CD14-positive monocyte (primary cell): ENCODE measurements at regions of chr16 and their contacts with region 1.

Region 1: DNA sequence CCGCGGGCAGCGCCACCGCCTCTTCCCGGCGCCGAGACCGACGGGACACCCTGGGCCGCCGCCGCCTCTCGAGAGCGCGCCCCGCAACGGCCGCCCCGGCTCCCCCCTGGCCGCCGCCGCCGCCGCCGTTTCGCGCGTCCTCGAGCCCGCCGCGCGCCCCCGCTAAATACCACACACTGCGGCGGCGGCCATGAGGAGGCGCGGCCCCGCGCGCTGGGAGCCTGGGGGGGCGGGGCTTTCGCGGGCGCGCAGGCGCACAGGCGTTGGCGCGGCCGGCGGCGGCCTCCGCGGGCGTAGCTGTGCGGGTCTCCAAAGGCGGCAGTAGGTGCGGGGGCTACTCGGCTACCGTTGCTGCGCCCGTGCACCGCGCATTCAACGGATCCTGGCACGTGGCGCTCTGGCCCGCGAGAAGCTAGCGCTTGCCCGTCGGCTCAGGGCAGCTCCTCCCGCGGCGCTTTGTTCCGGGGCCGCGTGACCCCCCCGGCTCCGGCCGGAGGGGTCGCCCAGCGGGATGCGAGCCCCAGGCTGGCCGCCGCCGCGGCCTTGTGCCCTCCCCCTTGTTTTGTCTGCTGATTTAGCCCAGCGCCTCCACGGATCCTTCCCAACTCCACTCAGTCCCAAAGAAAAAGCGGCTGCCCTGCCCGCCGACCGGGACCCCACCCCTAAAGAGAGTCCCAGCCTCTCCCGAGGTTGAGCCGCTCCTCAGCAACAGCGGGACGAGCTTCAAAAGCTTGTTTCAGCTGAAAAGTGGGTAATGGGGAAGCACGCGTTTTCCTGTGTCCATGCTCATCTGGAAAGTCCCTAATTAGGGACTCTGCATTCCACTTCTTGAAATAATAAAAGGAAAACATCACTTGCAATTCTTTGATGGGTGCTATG is at the start of gene SIAH1:
- DNase-seq: peak; percentile 68 to 85 (median 72)
- H3K4me3 ChIP-seq: peak within 1 kb of the TSS; percentile 64 to 98 (median 81)
- H3K4me3 Mint-ChIP-seq: peak within 1 kb of the TSS; percentile 95 to 96
- H3K27ac ChIP-seq: peak within 1 kb of the TSS; percentile 83 to 97
- H3K27ac Mint-ChIP-seq: peak within 1 kb of the TSS; percentile 97 to 99 (median 98)
- H3K4me1 ChIP-seq: peaks cover 38 to 62% of the 10 kb centered on the region in 2 donors
- H3K4me1 Mint-ChIP-seq: peaks cover 45% of the 10 kb centered on the region
- H3K27me3 ChIP-seq: no peaks in the 10 kb centered on the region
- H3K27me3 Mint-ChIP-seq: no peaks in the 10 kb centered on the region
- CTCF ChIP-seq: no peak
- polyA plus RNA-seq, gene SIAH1: 4.9 to 11.8 (median 5.6) TPM

Region 2: GRCh38 chr16:48353565-48354163 is 31.8 kb before region 1 on chr16:
- intact Hi-C with region 1: loop called in 1 of 2 experiments (anchors 5 kb)
- DNase-seq: peak; percentile 78 to 84 (median 82)
- H3K4me3 ChIP-seq: no peak overlapping the region
- H3K4me3 Mint-ChIP-seq: no peak overlapping the region
- H3K27ac ChIP-seq: no peak overlapping the region
- H3K27ac Mint-ChIP-seq: peak overlapping the region in 5 of 7 donors; percentile 1 to 68 (median 63)
- H3K4me1 ChIP-seq: no peaks in the 10 kb centered on the region
- H3K4me1 Mint-ChIP-seq: peaks cover 8% of the 10 kb centered on the region
- H3K27me3 ChIP-seq: no peaks in the 10 kb centered on the region
- H3K27me3 Mint-ChIP-seq: no peaks in the 10 kb centered on the region
- CTCF ChIP-seq: peak; percentile 96

Region 3: DNA sequence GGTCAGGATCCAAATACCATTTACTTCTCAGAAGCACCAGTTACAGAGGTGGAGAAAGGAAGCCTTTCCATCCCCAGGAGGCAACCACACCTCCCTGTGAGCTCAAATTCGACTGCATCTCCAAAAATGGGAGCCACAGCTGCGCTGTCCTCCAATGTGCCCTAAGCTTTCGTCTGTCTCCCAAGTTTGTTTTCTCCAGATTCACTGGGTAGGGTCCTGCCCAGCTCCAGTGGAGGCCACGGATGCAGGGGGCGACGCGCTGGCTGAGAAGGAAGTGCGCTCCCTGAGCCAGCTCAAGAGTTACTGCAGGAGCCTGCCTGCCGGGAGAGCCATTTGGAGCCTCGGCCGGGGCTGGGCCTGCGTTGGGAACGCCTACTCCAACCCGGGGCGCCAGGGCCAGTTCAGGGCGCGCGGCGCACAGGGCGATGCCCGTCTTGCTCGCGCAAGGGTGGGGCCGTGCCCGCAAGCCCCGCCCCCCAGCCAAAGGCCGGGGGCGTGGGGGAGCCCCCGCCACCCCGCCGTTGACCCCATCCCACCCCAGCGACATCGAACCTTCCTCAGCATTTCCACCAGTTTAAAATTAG is 19.8 kb before region 1 on chr16:
- intact Hi-C with region 1: loop called in 1 of 2 experiments (anchors 2 kb)
- DNase-seq: peak; percentile 73 to 82 (median 76)
- H3K4me3 ChIP-seq: peak overlapping the region; percentile 65 to 96 (median 84)
- H3K4me3 Mint-ChIP-seq: peak overlapping the region; percentile 73 to 93
- H3K27ac ChIP-seq: peak overlapping the region; percentile 88 to 96
- H3K27ac Mint-ChIP-seq: peak overlapping the region; percentile 88 to 95 (median 90)
- H3K4me1 ChIP-seq: peaks cover 29 to 38% of the 10 kb centered on the region in 2 donors
- H3K4me1 Mint-ChIP-seq: peaks cover 48% of the 10 kb centered on the region
- H3K27me3 ChIP-seq: no peaks in the 10 kb centered on the region
- H3K27me3 Mint-ChIP-seq: no peaks in the 10 kb centered on the region
- CTCF ChIP-seq: no peak

Region 4: GRCh38 chr16:48432136-48432535 is 46.6 kb after region 1 on chr16:
- intact Hi-C with region 1: loop called in 1 of 2 experiments (anchors 5 kb)
- DNase-seq: peak; percentile 77 to 90 (median 82)
- H3K4me3 ChIP-seq: peak overlapping the region in 1 of 3 experiments; percentile 33
- H3K4me3 Mint-ChIP-seq: peak overlapping the region in 1 of 2 donors; percentile 84
- H3K27ac ChIP-seq: peak overlapping the region in 1 of 2 donors; percentile 72
- H3K27ac Mint-ChIP-seq: peak overlapping the region; percentile 79 to 97 (median 92)
- H3K4me1 ChIP-seq: peaks cover 42 to 46% of the 10 kb centered on the region in 2 donors
- H3K4me1 Mint-ChIP-seq: peaks cover 49% of the 10 kb centered on the region
- H3K27me3 ChIP-seq: no peaks in the 10 kb centered on the region
- H3K27me3 Mint-ChIP-seq: peaks cover 0 to 3% (median 0%) of the 10 kb centered on the region in 3 donors
- CTCF ChIP-seq: no peak

Region 5: DNA sequence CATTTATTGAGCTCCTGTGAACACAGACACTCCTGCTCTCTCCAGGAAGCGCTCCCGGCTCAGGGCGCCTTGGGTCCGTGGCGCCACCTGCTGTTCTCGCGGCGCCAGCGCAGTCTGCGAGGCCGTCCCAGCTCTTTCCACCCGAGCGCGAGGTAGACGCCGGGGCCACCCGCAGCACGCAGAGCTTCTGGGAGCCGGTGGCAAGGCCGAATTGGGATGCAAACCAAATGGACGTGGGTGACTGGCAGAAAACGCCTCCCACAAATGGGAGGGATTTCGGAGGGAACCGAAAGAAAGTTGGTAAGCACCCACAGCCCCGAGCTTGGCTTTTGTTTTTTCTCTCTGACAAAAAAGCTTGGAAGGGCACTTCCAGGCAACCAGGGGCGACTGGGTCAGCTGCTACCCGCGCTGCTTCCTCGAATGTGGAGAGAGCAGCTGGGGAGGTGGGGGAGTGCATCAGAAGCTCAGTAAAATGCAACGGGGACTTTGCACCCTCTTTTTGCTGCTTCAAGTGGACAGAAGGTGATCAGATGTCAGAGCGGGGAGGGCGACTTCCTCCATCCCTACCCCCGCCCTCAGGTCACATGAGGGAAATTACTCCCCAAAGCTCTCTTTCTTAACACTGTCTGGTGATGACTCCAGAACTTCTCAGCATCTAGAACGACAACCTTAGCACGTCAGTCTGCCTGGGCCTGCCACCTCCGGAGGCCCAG is 237.9 kb after region 1 on chr16:
- intact Hi-C with region 1: loop called in 1 of 2 experiments (anchors 10 kb)
- DNase-seq: peak; percentile 95 to 97 (median 97)
- H3K4me3 ChIP-seq: peak overlapping the region; percentile 72 to 78 (median 77)
- H3K4me3 Mint-ChIP-seq: peak overlapping the region; percentile 87 to 93
- H3K27ac ChIP-seq: peak overlapping the region; percentile 87 to 94
- H3K27ac Mint-ChIP-seq: peak overlapping the region; percentile 97 to 99 (median 98)
- H3K4me1 ChIP-seq: peaks cover 42 to 43% of the 10 kb centered on the region in 2 donors
- H3K4me1 Mint-ChIP-seq: peaks cover 48% of the 10 kb centered on the region
- H3K27me3 ChIP-seq: no peaks in the 10 kb centered on the region
- H3K27me3 Mint-ChIP-seq: no peaks in the 10 kb centered on the region
- CTCF ChIP-seq: peak; percentile 99